Activated T-helper 1 cell treated with anti-CD3 and anti-CD28 coated beads, Interleukin-12 subunit alpha, Interleukin-12 subunit beta, Interleukin-2, Interleukin-4 antibody, amounts not matched to agents 30 ng/mL and 10 ng/mL and 1 ng/mL, durations not matched to agents 14 hours and 24 hours and 36 hours (primary cell): ENCODE measurements at regions of chr15 and their contacts with region 1.

Region 1: GRCh38 chr15:67134067-67134838 is 68.9 kb downstream of the SMAD3 start:
- DNase-seq: peak; percentile 69
- H3K4me3 Mint-ChIP-seq: peak overlapping the region; percentile 86
- H3K27ac Mint-ChIP-seq: peak overlapping the region; percentile 98
- H3K4me1 Mint-ChIP-seq: peaks cover 100% of the 10 kb centered on the region
- H3K27me3 Mint-ChIP-seq: no peaks in the 10 kb centered on the region

Region 2: DNA sequence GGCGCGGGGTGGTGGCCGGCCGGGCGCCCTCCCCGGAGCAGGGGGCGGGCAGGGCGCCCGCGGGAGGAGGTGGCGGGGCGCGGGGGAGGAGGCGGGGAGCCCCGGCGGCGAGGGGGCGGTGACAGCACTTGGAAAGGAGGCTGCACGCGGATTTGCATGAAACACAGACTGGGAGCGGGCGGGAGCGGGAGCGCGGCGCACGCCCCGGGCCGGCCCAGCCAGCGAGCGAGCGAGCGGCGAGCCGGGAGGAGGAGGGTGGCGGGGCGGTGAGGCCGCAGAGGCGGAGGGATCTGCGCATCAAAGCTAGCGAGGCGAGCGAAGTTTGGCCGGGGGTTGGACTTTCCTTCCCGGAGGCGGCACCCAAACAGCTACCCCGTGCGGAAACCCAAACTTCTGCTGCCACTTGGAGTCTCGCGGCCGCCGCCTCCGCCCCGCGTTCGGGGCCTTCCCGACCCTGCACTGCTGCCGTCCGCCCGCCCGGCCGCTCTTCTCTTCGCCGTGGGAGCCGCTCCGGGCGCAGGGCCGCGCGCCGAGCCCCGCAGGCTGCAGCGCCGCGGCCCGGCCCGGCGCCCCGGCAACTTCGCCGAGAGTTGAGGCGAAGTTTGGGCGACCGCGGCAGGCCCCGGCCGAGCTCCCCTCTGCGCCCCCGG is 68.7 kb before region 1 on chr15 and contains the start of gene SMAD3:
- intact Hi-C with region 1: loop called (anchors 5 kb)
- DNase-seq: peak; percentile 81
- H3K4me3 Mint-ChIP-seq: peak within 1 kb of the TSS; percentile 100
- H3K27ac Mint-ChIP-seq: peak within 1 kb of the TSS; percentile 95
- H3K4me1 Mint-ChIP-seq: peaks cover 65% of the 10 kb centered on the region
- H3K27me3 Mint-ChIP-seq: peaks cover 3% of the 10 kb centered on the region
- total RNA-seq, gene SMAD3: 80.2 and 80.4 TPM in 2 replicates

Region 3: DNA sequence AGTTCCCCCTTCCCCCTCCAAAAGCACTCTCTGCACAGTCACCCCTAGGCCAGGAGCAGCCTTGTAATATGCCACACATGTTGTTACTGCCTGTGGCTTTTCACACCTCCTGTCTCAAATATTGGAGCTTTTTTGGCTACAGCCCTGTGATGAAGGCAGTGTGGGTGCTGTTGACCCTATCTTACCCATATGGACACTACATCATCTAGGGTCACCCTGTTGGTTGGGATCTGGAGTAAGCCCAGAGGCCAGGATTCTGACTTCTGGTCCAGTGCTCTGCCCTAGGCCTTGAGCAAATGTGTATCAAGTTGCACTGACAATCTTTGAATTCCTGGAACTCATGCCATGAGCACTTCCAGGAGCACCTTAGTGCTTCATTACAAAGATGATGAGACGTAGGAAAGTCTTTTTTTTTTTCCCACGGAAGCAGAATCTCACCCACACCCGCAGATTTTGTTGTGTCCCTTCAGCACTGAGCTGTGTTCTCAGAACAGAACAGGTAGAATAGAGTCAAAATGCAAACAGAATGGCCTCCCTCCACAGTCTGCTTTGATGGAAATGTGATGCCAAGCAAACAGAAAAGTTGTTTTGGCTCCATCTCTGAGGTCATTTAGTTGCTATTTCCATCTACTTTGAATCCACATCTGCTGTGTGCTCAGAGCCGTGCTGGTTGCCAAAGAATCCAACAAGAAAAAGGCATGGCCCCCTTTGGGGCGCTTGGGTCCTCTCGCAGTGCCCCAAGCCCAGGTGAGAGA is 19.2 kb before region 1 on chr15:
- intact Hi-C with region 1: loop called (anchors 1 kb)
- DNase-seq: no peak
- H3K4me3 Mint-ChIP-seq: peak overlapping the region; percentile 38
- H3K27ac Mint-ChIP-seq: peak overlapping the region; percentile 97
- H3K4me1 Mint-ChIP-seq: peaks cover 95% of the 10 kb centered on the region
- H3K27me3 Mint-ChIP-seq: no peaks in the 10 kb centered on the region

Region 4: DNA sequence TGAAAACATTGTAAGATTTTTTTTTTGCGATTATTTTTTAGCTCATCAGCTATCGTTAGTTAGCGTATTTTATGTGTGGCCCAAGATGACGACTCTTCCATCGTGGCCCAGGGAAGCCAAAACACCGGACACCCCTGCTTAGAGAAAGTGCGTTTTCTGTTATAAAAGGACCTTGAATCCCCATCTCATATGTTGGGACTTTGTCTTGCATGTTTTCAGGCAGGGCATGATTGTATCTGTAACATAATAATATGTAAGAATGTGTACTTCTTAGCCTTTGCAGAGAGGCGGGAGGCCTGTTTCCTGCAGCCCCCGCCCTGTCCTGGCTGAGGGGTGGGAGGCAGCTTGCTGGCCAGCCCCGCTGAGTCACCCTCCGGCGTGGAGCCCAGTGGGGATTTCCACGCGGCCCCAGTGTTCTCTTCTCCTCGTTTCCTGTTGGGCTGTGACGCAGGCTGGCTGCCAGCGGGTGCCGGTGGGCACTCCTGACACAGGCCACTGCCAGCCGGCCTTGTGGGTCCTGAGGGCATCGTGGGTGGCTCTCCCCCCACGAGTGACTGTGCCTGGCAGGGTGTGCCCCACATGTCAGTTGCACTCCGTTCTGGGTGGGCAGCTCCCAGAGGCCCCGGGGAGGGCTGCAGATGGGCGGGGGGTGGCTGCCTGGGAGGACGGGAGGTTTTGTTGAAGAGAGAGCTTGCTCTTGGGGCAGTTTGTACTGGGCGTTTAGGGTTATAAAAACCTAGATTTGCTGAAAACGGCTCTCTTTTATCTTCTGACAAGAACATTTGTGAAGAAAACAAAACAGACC is 13.2 kb before region 1 on chr15:
- intact Hi-C with region 1: loop called (anchors 1 kb)
- DNase-seq: peak; percentile 88
- H3K4me3 Mint-ChIP-seq: peak overlapping the region; percentile 84
- H3K27ac Mint-ChIP-seq: peak overlapping the region; percentile 97
- H3K4me1 Mint-ChIP-seq: peaks cover 95% of the 10 kb centered on the region
- H3K27me3 Mint-ChIP-seq: no peaks in the 10 kb centered on the region

Region 5: GRCh38 chr15:67150028-67150860 is 16.0 kb after region 1 on chr15:
- intact Hi-C with region 1: loop called (anchors 1 kb)
- DNase-seq: peak; percentile 21
- H3K4me3 Mint-ChIP-seq: peak overlapping the region; percentile 48
- H3K27ac Mint-ChIP-seq: peak overlapping the region; percentile 91
- H3K4me1 Mint-ChIP-seq: peaks cover 80% of the 10 kb centered on the region
- H3K27me3 Mint-ChIP-seq: no peaks in the 10 kb centered on the region

Region 6: DNA sequence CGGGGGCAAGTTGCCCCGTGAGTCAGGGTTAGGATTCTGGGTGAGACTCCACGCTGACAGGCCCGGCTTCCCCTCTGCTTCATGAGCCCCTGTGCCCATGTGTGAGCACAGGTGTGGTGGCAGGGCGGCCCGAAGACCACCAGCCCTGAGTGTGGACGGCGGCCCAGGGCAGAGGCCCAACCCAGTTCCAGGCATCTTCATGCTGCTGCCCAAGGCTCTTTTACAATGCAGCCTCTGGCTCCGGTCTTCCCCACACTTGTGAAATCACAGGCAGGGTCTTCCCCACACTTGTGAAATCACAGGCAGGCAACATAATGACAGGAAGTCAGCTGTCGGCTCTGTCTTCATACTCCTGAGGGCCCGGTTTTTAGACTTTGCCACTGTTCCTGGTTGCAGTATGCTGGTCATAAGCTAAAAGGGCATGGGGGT is 41.4 kb after region 1 on chr15:
- intact Hi-C with region 1: loop called (anchors 2 kb)
- DNase-seq: no peak
- H3K4me3 Mint-ChIP-seq: peak overlapping the region; percentile 31
- H3K27ac Mint-ChIP-seq: peak overlapping the region; percentile 83
- H3K4me1 Mint-ChIP-seq: peaks cover 82% of the 10 kb centered on the region
- H3K27me3 Mint-ChIP-seq: no peaks in the 10 kb centered on the region